Adrenal gland (tissue), 19 donors: ENCODE measurements at regions of chr6 and their contacts with region 1.

Region 1: GRCh38 chr6:125853740-125854139 is 63.0 kb downstream of the NCOA7 start:
- DNase-seq: no peak
- H3K4me3 ChIP-seq: no peak overlapping the region
- H3K27ac ChIP-seq: peak overlapping the region in 1 of 5 donors; percentile 55
- H3K4me1 ChIP-seq: peaks cover 15 to 42% of the 10 kb centered on the region in 2 donors
- H3K27me3 ChIP-seq: no peaks in the 10 kb centered on the region
- CTCF ChIP-seq: no peak
- POLR2A ChIP-seq: no peak

Region 2: DNA sequence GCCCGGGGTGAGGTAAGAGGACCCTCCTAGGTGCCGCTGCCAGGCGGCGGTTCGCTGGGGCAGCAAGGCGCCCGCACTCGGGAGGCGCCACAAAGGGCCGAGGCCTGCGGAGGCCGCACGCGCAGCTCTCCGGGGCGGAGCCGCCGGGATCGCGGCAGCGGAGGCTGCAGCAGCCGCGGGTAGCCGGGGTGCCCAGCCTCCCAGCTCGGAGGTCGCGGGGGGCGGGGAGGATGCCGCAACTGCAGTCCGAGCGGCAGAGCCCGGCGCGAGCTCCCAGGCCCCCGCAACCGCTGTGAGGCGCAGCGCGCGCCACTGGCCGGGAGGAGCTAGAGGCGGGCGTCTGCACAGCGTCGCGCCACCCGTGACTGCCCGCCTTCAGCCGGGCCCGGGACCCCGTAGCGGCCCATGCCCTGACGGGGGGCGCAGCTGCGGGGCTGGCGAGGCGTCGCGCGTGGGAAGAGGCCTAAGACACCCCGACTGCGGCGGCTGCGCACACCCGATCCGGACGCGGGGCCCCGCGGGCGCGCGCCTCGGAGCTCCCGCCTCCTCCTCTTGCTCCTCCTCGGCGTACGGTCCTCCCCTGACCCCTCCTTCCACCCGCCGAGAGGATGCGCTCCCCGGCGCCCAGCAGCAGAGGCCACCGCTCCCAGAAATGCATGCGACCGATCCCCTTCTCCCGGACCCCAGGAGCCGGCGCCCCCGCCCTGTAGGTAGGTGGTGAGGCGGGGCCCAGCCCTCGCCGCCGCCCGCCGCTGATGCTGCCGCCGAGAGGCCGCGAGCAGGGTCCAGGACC is 63.2 kb before region 1 on chr6 and contains the start of gene NCOA7:
- intact Hi-C with region 1: loop called in 1 of 2 experiments (anchors 5 kb)
- DNase-seq: peak; percentile 77 to 89 (median 82)
- H3K4me3 ChIP-seq: peak within 1 kb of the TSS; percentile 65 to 96 (median 92)
- H3K27ac ChIP-seq: peak within 1 kb of the TSS; percentile 95 to 99 (median 98)
- H3K4me1 ChIP-seq: peaks cover 42 to 60% of the 10 kb centered on the region in 2 donors
- H3K27me3 ChIP-seq: no peaks in the 10 kb centered on the region
- CTCF ChIP-seq: peak in 2 of 6 experiments; percentile 6 to 21
- POLR2A ChIP-seq: peak; percentile 82 to 89
- total RNA-seq, gene NCOA7: 27.9 to 180 (median 72.3) TPM